MCF 10A (cell line): ENCODE measurements at regions of chr10 and their contacts with region 1.

Region 1: GRCh38 chr10:21083871-21084295 is 186.8 kb upstream of the NEBL start:
- DNase-seq: peak; percentile 64
- H3K4me3 Mint-ChIP-seq: no peak overlapping the region
- H3K27ac Mint-ChIP-seq: no peak overlapping the region
- H3K4me1 Mint-ChIP-seq: peaks cover 19% of the 10 kb centered on the region
- H3K27me3 Mint-ChIP-seq: no peaks in the 10 kb centered on the region
- CTCF ChIP-seq: no peak

Region 2: DNA sequence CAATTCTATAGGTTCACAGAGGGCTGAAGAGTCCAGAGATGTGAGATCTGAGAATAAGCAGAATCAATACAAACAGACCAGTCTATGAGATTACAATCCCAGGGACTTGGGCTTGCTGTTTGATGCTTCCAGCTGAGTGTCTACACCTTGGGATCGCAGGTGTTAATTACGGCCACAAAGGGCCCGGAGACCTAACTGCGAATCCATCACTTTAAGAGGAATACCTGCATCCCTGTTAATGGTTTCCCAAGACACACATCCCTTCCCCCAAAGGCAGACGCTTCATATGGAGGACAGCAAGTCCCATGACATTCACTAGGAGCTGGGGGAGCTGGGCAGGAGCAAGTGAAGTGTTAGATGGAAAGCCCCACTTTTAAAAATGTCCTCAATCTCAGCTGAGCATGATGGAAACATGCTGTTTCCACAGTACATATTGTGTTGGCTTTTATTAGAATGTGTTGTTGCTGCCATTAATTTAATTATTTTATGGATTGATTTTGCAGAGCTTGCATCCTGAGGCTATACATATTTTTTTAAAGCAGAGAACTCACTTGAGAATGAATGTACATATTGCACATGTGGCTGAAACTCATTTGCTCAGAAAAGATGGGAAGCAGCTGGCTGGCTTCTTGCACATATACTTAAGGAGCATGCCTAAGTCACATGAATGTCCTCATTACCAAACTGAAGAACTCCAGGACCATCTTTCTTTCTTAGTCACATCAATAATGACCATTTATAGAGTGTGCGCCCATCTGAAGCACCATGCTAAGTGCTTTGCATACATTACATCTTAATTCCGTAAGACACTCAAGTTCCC is 338.1 kb before region 1 on chr10:
- CTCF ChIA-PET with region 1: no interaction called
- POLR2A ChIA-PET with region 1: no interaction called
- intact Hi-C with region 1: no loop called
- DNase-seq: no peak
- H3K4me3 Mint-ChIP-seq: no peak overlapping the region
- H3K27ac Mint-ChIP-seq: no peak overlapping the region
- H3K4me1 Mint-ChIP-seq: no peaks in the 10 kb centered on the region
- H3K27me3 Mint-ChIP-seq: no peaks in the 10 kb centered on the region
- CTCF ChIP-seq: no peak

Region 3: DNA sequence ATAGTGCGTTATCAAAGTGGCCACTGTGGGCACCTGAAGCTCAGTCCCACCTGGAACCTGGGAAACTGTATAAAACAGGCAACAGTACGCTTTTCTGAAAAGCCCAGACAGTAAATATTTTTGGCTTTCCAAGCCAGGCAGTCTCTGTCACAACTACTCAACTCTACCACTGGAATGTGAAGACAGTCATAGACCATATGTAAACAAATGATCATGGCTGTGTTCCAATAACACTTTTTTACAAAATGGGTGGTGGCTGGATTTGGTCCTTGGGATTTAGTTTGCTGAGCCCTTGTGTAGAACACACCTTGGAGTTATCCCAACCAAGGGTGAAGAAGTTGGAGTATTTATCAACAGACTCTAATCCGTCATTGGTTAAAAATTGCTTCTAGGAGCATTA is 181.7 kb after region 1 on chr10:
- CTCF ChIA-PET with region 1: interaction called, 120 read pairs
- POLR2A ChIA-PET with region 1: interaction called, 3 read pairs
- intact Hi-C with region 1: no loop called
- DNase-seq: peak; percentile 83
- H3K4me3 Mint-ChIP-seq: peak overlapping the region; percentile 35
- H3K27ac Mint-ChIP-seq: peak overlapping the region; percentile 93
- H3K4me1 Mint-ChIP-seq: peaks cover 20% of the 10 kb centered on the region
- H3K27me3 Mint-ChIP-seq: no peaks in the 10 kb centered on the region
- CTCF ChIP-seq: no peak